Dorsolateral prefrontal cortex (tissue), 120 donors: ENCODE measurements at regions of chr9 and their contacts with region 1.

Region 1: GRCh38 chr9:95875305-95876137 is at the start of gene ERCC6L2:
- DNase-seq: peak; percentile 76 to 96 (median 92)
- H3K4me3 ChIP-seq: no peak within 1 kb of the TSS
- H3K27ac ChIP-seq: peak within 1 kb of the TSS in 43 of 59 donors; percentile 91 to 100 (median 100)
- H3K27me3 ChIP-seq: no peaks in the 10 kb centered on the region
- CTCF ChIP-seq: peak in 35 of 56 donors; percentile 5 to 48 (median 24)
- total RNA-seq, gene ERCC6L2: 61.3 to 111 (median 82.9) TPM

Region 2: DNA sequence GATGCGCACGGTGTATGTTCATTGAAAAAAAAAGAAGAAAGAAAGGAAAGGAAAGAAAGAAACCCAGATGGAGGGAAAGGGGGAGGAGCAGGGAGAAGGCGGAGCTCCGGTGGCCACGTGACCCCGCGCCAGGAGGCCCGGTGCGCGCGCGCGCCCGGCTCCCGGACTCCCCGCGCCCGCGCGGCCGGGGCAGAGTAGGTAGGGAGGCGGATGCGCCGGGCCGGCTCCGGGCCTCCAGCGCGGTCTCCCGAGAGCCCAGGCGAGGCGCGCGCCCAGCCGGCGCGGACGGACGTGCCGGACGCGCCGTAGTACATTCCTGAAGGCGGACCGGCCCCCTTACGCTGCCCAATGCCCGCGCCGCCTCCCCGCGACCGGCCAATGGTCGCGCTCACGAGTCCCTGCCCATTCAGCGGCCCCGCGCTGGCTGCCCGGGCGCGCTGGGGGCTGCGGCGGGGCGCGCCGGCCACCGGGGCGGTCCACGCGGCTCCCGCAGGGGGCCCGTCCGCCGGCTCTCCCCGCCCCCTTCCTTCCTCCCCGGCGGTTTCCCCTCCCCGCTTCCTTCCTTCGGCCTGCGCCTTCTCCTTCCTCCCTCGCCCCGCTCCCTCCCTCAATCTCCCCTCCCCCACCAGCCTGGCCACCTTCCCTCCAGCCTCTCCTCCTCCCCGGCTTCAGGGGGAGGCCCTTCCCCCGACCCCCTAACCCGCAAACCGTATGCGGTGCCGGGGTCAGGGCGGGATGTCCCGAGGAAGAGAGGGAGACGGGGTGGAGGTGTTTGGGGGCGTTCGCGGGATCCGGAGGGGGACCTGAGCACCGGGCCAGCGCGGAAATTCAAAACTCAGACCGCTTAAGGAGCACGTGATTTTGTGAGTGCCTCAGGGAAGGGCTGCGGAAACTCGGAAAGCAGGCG is 364.6 kb before region 1 on chr9:
- intact Hi-C with region 1: loop called (anchors 2 to 5 kb)
- DNase-seq: peak; percentile 77 to 92 (median 90)
- H3K4me3 ChIP-seq: peak overlapping the region; percentile 62 to 92 (median 83)
- H3K27ac ChIP-seq: peak overlapping the region; percentile 66 to 98 (median 95)
- H3K27me3 ChIP-seq: no peaks in the 10 kb centered on the region
- CTCF ChIP-seq: peak in 12 of 56 donors; percentile 3 to 24 (median 14)

Region 3: DNA sequence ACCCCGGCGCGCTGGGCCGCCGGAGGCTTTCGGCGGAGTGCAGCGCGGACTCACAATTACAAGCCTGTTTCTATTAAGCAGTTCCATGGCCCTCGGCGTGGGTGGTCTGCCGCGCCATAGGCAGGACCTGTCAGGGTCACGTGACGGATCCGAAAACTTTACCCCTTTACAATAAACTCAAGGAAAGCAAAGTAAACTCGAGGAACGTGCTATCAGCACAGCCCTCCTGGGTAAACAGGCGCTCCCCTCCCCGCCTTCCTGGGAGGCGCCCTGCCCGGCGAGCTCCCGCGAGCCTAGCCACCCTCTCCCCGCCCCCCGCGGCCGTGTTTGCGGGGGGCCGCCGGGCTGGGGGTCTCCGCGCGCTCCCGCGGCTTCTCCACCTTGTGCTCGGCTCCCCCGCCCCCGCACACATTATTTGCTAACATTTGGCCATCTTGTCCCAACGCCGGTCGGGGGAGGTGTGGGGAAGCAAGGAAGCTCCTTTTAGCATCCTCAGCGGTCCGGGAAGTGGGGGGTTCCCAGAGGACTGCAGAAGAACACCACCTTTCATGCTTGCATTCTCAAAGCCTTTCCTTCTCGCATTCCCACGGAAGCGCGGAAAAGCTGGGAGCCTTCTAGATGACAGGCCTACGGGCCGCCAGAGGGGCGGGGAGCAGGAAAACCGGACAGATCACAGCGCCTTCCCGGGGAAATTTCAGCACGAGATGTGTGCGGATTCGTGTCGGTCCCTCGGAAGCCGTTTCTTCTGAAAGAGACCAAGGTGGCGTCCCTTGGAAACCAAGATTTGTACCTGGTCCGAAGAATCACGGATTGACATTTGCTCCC is 358.6 kb before region 1 on chr9 and contains the start of gene PTCH1:
- intact Hi-C with region 1: loop called in 1 of 2 experiments (anchors 5 kb)
- DNase-seq: peak in 5 of 10 donors; percentile 38 to 59 (median 51)
- H3K4me3 ChIP-seq: peak within 1 kb of the TSS; percentile 51 to 82 (median 69)
- H3K27ac ChIP-seq: peak within 1 kb of the TSS in 55 of 59 donors; percentile 3 to 84 (median 64)
- H3K27me3 ChIP-seq: no peaks in the 10 kb centered on the region
- CTCF ChIP-seq: peak in 5 of 56 donors; percentile 2 to 23 (median 7)
- total RNA-seq, gene PTCH1: 17.9 to 104 (median 46.0) TPM

Region 4: GRCh38 chr9:95726756-95727155 is 148.8 kb before region 1 on chr9:
- intact Hi-C with region 1: loop called (anchors 10 kb)
- DNase-seq: no peak
- H3K4me3 ChIP-seq: no peak overlapping the region
- H3K27ac ChIP-seq: no peak overlapping the region
- H3K27me3 ChIP-seq: peaks cover 0 to 13% (median 0%) of the 10 kb centered on the region in 45 donors
- CTCF ChIP-seq: peak; percentile 42 to 82 (median 72)

Region 5: DNA sequence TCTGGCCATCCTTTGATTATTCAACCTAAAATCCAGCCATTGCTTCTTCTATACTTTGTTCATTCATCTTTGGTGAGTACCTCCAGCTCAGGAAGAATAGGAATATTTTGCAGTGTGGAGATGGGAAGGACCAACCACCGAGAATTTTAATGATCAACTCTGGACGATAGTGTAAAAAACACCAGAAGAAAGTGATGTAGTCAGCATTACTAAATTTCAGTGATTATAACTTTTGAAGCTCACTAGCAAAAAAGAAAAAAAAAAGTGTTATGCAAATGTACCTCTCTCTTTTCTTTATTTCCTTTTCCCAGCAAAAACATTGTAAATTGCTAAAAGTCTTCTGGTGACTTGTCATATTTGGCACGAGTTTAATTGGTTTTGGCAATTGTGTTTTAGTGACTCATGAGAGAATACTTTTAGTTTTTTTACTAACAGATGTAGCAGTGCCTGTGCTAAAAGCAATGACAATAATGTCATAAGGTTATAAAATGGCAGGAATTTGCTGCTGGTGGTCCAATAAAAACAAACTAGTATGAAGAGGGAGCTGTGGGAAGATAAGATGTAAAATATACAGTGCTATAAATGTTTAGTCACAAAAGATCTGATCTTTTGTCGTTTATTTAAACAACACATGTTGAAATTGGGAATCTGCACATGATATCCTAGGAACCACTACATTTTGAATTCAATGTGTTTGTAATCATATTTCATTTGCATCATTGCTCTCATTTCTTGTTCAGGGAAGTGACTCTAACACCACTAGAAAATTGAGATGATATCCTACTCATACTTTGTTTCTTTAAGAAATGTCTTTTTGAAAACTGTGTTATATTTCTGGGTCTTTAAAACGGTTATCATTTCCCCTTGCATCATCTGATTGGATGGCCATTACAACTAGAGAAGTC is 81.3 kb before region 1 on chr9:
- intact Hi-C with region 1: no loop called
- DNase-seq: no peak
- H3K4me3 ChIP-seq: no peak overlapping the region
- H3K27ac ChIP-seq: no peak overlapping the region
- H3K27me3 ChIP-seq: no peaks in the 10 kb centered on the region
- CTCF ChIP-seq: no peak

Region 6: DNA sequence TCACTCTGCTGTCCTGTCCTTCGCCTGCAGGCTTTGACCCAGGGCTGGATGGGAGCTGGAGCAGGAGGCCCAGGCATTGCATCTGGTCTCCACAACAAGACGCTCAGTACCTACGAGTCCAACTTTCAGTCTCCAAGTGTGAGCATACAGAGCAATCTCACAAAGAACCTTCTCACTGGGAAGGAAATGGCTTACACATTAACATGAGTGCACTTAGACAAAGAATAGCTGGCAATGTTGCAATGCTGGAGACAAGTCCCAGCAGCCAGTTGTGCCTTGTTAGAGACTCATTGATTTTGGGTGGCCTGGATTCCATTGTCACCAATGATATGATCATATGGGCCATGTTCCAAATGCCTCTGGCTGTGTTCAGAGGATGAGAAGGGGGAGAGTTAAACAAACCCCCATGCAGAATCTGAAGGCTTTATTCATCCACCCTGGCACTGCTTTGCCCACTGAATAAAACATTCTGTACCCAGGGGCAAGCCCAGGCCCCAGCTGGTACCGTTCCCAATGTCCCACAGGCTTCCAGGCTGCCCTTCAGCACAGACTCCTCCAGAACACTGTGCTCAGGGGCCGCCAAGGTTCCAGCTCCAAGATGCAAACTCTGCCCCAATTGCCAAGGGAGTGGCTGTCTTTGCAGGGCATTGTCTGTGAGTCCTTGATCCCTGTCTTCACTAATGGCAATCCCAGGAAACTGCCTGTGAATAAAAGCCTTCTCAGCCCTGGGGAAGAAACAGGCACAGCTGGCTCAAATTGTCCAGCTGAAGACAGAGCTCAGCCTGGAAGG is 240.9 kb after region 1 on chr9:
- intact Hi-C with region 1: loop called (anchors 1 to 2 kb)
- DNase-seq: peak; percentile 41 to 96 (median 90)
- H3K4me3 ChIP-seq: peak overlapping the region in 50 of 59 donors; percentile 1 to 63 (median 32)
- H3K27ac ChIP-seq: peak overlapping the region; percentile 75 to 99 (median 94)
- H3K27me3 ChIP-seq: no peaks in the 10 kb centered on the region
- CTCF ChIP-seq: peak in 9 of 56 donors; percentile 8 to 37 (median 12)

Region 7: GRCh38 chr9:96654443-96655197 is 779.1 kb after region 1 on chr9:
- intact Hi-C with region 1: loop called in 1 of 2 experiments (anchors 10 kb)
- DNase-seq: peak; percentile 46 to 85 (median 73)
- H3K4me3 ChIP-seq: peak overlapping the region; percentile 45 to 81 (median 70)
- H3K27ac ChIP-seq: peak overlapping the region; percentile 71 to 98 (median 93)
- H3K27me3 ChIP-seq: no peaks in the 10 kb centered on the region
- CTCF ChIP-seq: peak in 24 of 56 donors; percentile 8 to 52 (median 22)